Astrocyte of the cerebellum (primary cell): ENCODE measurements at regions of chr12 and their contacts with region 1.

Region 1: DNA sequence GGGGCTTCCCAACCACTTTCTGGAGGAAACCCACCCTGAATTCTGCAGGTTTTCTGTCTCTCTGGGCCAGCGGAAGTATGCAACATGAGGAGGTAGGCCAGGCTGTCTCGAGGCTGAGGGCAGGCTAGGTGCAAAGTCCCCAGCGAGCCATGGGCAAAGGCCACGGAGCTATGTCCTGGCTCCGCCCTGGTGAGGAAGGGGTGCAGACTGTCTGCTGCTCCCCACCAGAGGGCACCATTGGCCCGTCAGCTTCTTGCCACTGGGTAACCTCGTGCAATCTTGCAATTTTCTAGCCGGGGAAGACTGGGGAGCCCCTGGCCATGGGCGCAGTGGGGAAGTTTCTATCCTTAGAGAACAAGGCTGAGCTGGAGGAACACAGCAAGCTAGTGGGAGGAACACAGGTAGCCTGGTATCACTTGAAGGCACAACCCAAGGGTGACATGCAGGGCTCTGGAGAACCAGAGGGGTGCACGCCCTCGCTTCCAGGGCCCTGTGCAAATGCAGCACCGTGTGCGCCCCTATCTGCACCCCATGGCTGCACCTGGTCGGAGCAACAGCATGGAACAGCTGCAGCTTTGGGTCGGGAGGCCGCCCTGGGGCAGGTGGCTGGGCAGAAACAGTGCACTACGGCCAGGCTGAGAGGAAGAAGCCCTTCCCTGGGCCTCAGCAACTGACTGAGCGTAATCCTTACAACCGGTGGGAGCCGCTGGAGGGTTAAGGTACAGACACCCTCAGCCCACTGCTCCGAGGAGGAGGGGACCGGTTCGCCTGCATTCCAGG is 27.6 kb upstream of the RPLP0 start:
- DNase-seq: peak; percentile 66
- H3K4me3 ChIP-seq: no peak overlapping the region
- CTCF ChIP-seq: peak; percentile 92

Region 2: DNA sequence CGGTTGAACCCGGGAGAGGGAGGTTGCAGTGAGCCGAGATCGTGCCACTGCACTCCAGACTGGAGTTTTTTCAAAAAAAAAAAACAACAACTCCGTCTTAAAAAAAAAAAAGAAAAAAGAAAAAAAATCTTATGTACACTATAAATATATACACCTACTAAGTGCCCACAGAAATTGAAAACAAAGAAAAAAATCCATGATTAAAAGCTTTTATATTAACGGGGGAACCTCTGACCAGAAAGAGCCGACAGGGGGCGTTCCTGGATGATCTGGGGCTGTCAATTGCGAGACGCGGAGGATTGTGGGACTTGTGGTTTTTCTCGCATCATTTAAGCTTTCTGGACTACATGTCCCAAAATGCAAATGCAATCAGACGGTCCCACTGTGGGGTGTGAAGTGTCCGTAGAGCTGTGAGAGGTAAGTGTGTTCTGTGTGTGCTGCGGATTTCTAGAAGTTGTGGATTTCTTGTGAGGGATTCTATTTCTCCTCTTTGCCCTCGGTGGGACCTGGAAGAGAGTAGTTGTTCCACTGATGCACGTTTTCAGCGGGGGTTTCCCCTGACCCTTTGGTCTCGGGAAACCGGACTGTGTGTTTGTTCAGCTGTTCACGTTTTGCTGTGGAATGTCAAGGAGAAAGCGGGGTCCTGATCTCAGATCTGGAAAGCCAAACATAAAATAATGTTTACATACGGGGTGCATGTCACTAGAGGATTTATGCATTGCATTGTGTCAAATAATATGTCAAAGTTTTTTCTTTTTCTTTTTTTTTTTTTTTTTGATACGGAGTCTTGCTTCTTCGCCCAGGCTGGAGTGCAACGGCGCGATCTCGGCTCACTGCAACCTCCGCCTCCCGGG is 73.7 kb after region 1 on chr12 and contains the start of gene SIRT4:
- in situ Hi-C with region 1: loop called (anchors 10 kb)
- DNase-seq: peak; percentile 92
- H3K4me3 ChIP-seq: peak within 1 kb of the TSS; percentile 78
- CTCF ChIP-seq: peak; percentile 92

Region 3: GRCh38 chr12:120495723-120496412 is 267.4 kb after region 1 on chr12 and contains the start of gene DYNLL1:
- in situ Hi-C with region 1: loop called (anchors 10 kb)
- DNase-seq: peak; percentile 92
- H3K4me3 ChIP-seq: peak within 1 kb of the TSS; percentile 96
- CTCF ChIP-seq: no peak